SK-N-SH (cell line): ENCODE measurements at regions of chr2 and their contacts with region 1.

Region 1: GRCh38 chr2:160362541-160362940 is 131.1 kb downstream of the RBMS1 start:
- DNase-seq: no peak
- H3K4me3 ChIP-seq: no peak overlapping the region
- H3K27ac ChIP-seq: no peak overlapping the region; a peak in 1 of 4 replicates
- H3K4me1 ChIP-seq: peaks cover 12 to 23% of the 10 kb centered on the region in 2 experiments; a peak in 3 of 4 replicates
- H3K27me3 ChIP-seq: no peaks in the 10 kb centered on the region
- CTCF ChIP-seq: no peak
- EP300 ChIP-seq: no peak
- RAD21 ChIP-seq: no peak

Region 2: DNA sequence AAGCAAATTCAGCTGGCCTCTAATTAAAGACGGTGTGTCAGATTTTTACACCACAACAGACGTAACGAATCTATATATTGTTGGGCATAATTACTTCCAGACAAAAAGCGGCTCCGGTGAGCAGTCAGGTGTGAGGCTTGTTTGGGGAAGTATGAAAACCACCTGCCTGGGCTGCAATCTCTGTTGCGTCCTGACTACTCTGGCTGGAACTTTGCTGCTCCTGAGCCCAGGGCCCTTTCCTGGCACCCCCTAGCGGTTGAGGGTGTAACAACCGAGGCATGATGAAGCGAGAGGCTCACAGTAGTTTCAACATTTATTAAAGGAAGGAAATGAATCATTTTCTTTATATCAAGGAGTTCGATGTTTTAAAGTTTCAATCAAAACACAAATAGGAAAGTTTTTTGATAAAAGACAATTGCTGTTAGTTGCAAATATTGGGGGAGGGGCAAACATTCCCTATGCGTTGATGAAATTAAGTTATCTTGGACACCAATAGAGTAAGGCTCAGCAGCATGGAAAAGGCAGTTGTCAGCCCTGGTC is 151.9 kb before region 1 on chr2:
- CTCF ChIA-PET with region 1: no interaction called
- POLR2A ChIA-PET with region 1: no interaction called
- DNase-seq: peak; percentile 52
- H3K4me3 ChIP-seq: no peak overlapping the region
- H3K27ac ChIP-seq: peak overlapping the region; percentile 95 to 97; a peak in 3 of 4 replicates
- H3K4me1 ChIP-seq: peaks cover 19 to 64% of the 10 kb centered on the region in 2 experiments
- H3K27me3 ChIP-seq: no peaks in the 10 kb centered on the region
- CTCF ChIP-seq: peak; percentile 81
- EP300 ChIP-seq: no peak
- RAD21 ChIP-seq: peak; percentile 61

Region 3: GRCh38 chr2:160375802-160376469 is 13.4 kb after region 1 on chr2:
- CTCF ChIA-PET with region 1: interaction called, 10 read pairs
- POLR2A ChIA-PET with region 1: no interaction called
- DNase-seq: no peak
- H3K4me3 ChIP-seq: no peak overlapping the region
- H3K27ac ChIP-seq: peak overlapping the region in 1 of 2 experiments; percentile 67; a peak in 3 of 4 replicates
- H3K4me1 ChIP-seq: peaks cover 33 to 80% of the 10 kb centered on the region in 2 experiments
- H3K27me3 ChIP-seq: no peaks in the 10 kb centered on the region
- CTCF ChIP-seq: no peak
- EP300 ChIP-seq: no peak
- RAD21 ChIP-seq: no peak